ENCODE measurements at regions of chr6 and their contacts with region 1.

Region 1: DNA sequence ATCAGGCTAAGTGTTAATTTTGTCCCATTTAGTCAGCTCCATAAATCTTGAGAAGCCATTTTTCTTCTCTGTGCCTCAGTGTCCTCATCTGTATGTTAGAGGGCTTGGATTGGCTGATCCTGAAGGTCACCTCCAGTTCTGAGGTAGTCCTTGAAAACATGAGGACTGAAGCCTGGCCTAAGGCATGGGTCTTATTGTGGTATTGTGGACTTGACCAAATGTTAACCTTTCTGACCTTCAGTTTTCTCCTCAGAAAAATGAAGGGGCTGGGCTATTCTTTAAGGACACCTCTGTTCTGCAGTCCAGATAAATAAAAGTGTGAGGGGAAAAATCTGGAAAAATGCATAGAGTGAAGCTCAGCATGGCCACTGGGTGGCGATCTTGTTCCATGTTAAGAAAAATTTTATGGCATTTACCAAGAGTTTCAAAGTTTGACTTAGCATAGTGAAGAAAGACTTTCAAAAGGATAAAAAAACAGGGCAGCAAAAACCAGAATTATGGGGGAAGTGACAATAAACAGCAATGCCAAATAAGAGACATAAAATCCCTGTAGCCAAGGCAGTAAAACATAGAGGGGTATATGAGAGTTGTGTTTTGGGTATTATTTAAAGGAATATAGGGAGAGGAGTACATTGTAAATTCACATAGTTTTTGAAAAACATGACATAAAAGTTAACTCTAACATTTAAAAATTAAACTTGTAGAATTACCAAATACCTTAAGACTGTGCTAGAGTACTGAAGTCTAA is 13.2 kb upstream of the TFB1M start:
- DNase-seq: peak; percentile 68
- H3K4me3 ChIP-seq: no peak overlapping the region
- H3K27ac ChIP-seq: no peak overlapping the region
- H3K4me1 ChIP-seq: no peaks in the 10 kb centered on the region
- H3K27me3 ChIP-seq: no peaks in the 10 kb centered on the region
- CTCF ChIP-seq: peak; percentile 48 to 86 (median 74)
- EP300 ChIP-seq: no peak
- POLR2A ChIP-seq: no peak

Region 2: GRCh38 chr6:155530219-155530834 is 202.8 kb after region 1 on chr6:
- intact Hi-C with region 1: loop called (anchors 5 kb)
- DNase-seq: no peak
- H3K4me3 ChIP-seq: no peak overlapping the region
- H3K27ac ChIP-seq: peak overlapping the region in 1 of 4 donors; percentile 57
- H3K4me1 ChIP-seq: peaks cover 0 to 10% (median 4%) of the 10 kb centered on the region in 4 donors
- H3K27me3 ChIP-seq: no peaks in the 10 kb centered on the region
- CTCF ChIP-seq: peak in 3 of 4 experiments; percentile 32 to 49 (median 33)
- EP300 ChIP-seq: no peak
- POLR2A ChIP-seq: no peak

Region 3: GRCh38 chr6:156557251-156557910 is 1229.9 kb after region 1 on chr6:
- intact Hi-C with region 1: loop called (anchors 10 kb)
- DNase-seq: no peak
- H3K4me3 ChIP-seq: no peak overlapping the region
- H3K27ac ChIP-seq: peak overlapping the region in 2 of 4 donors; percentile 16 to 40
- H3K4me1 ChIP-seq: peaks cover 0 to 10% (median 1%) of the 10 kb centered on the region in 4 donors
- H3K27me3 ChIP-seq: no peaks in the 10 kb centered on the region
- CTCF ChIP-seq: no peak
- EP300 ChIP-seq: no peak
- POLR2A ChIP-seq: no peak

Measured in sigmoid colon (tissue), 7 donors.